Adrenal gland (tissue), 19 donors: ENCODE measurements at regions of chr2 and their contacts with region 1.

Region 1: DNA sequence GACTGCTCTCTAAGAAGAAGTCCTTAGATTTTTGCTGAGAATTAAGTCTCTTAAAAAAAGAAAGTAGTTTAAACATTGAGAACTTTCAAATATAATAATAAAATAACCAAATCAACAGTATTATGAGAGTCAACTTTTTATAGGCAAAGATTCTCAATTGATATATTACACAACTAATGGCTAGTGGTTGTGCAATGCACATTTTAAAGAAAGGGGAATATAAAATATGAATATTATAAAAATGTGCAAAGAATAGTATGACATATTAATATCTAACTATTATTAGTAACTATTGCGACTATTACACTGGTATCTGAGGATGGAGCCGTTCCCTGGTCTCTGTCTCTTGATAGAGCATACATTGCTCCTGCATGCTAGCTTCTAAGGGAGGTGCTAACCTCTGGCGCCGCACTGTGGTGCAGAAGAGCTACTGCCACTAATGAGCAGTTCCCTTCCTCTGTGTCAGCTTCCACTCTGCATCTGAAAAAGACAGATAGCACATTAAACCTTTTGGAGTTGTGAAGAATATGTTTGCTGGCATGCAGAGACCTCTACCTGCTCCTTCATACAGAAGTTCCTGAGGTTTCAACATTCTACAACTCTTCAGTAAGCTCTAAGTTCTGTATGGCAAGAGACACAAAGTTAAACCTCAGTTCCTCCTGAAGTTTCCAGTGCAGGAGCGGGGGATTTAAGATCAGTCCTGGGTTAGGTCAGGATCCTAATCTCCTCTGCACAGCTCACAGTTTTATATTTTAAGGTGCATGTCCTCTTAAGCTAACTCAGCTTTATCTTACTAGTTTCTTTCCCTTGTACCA is 3.5 kb upstream of the SLC9A2 start:
- DNase-seq: peak; percentile 38 to 82 (median 60)
- H3K4me3 ChIP-seq: no peak overlapping the region
- H3K27ac ChIP-seq: no peak overlapping the region
- H3K4me1 ChIP-seq: peaks cover 12 to 14% of the 10 kb centered on the region in 2 donors
- H3K27me3 ChIP-seq: peaks cover 35% of the 10 kb centered on the region
- CTCF ChIP-seq: peak; percentile 69 to 82 (median 76)
- POLR2A ChIP-seq: no peak

Region 2: GRCh38 chr2:102313025-102313424 is 302.8 kb before region 1 on chr2:
- intact Hi-C with region 1: no loop called
- DNase-seq: no peak
- H3K4me3 ChIP-seq: no peak overlapping the region
- H3K27ac ChIP-seq: no peak overlapping the region
- H3K4me1 ChIP-seq: no peaks in the 10 kb centered on the region
- H3K27me3 ChIP-seq: no peaks in the 10 kb centered on the region
- CTCF ChIP-seq: no peak
- POLR2A ChIP-seq: no peak

Region 3: GRCh38 chr2:102473020-102473419 is 142.8 kb before region 1 on chr2 and contains the start of gene SLC9A4:
- intact Hi-C with region 1: loop called (anchors 10 kb)
- DNase-seq: peak in 6 of 7 donors; percentile 21 to 73 (median 58)
- H3K4me3 ChIP-seq: no peak within 1 kb of the TSS
- H3K27ac ChIP-seq: no peak within 1 kb of the TSS
- H3K4me1 ChIP-seq: peaks cover 0 to 4% of the 10 kb centered on the region in 2 donors
- H3K27me3 ChIP-seq: peaks cover 6% of the 10 kb centered on the region
- CTCF ChIP-seq: peak; percentile 64 to 83 (median 76)
- POLR2A ChIP-seq: no peak
- total RNA-seq, gene SLC9A4: 0.17 TPM in 1 of 9 donors, not detected in the others

Region 4: GRCh38 chr2:102520028-102520427 is 95.8 kb before region 1 on chr2:
- intact Hi-C with region 1: loop called in 1 of 2 experiments (anchors 10 kb)
- DNase-seq: peak in 6 of 7 donors; percentile 20 to 55 (median 40)
- H3K4me3 ChIP-seq: no peak overlapping the region
- H3K27ac ChIP-seq: no peak overlapping the region
- H3K4me1 ChIP-seq: no peaks in the 10 kb centered on the region
- H3K27me3 ChIP-seq: no peaks in the 10 kb centered on the region
- CTCF ChIP-seq: peak; percentile 54 to 61 (median 60)
- POLR2A ChIP-seq: no peak

Region 5: DNA sequence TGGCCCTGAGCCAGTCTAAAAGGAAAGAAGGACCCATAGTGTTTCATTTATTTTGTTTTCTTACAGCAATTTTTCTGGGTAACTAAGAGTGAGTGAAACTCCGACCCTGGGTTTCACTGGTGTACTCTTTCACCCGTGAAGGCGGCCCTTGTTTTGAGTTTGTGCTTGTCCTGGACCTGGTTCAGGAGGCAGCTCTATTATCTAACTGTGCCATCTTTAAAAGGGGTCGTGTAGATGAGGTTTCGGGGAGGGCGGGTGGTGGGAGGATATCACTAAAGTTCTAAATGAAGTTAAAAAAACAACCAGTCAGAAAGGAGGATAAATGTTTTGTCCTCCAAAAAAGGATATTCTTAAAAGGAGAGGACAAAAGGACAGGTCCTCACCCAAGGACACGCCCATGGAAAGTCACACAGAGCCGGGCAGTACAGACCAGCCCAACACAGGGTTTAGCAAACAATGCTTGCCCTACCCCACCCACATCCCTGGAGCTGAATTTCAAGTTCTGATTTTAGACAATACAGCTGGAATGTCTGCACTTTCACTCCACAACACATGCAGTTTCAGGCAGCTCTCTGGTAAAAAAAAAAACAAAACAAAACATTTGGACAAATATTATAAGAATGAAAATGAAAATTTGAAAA is 75.1 kb before region 1 on chr2:
- intact Hi-C with region 1: loop called in 1 of 2 experiments (anchors 10 kb)
- DNase-seq: no peak
- H3K4me3 ChIP-seq: no peak overlapping the region
- H3K27ac ChIP-seq: no peak overlapping the region
- H3K4me1 ChIP-seq: no peaks in the 10 kb centered on the region
- H3K27me3 ChIP-seq: no peaks in the 10 kb centered on the region
- CTCF ChIP-seq: no peak
- POLR2A ChIP-seq: no peak

Region 6: DNA sequence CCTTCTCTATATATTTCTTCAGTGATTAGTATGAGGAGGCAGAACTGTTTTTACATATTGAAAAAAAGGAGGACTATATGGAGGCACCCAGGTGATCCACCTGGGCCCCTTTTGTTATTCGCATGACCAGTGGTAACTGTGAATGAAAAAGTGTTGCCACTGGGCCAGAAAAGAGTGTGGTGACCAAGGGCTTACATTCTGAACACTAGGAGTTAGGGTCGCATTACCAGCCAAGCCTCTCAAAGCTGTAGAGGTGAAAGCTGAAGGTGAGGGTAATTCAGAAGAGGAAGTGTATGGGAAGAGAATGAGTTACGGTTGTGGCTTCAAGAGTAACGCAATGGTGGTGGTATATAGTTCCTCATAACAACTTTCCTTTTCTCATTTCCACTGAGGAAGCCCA is 633.6 kb after region 1 on chr2:
- intact Hi-C with region 1: no loop called
- DNase-seq: no peak
- H3K4me3 ChIP-seq: no peak overlapping the region
- H3K27ac ChIP-seq: no peak overlapping the region
- H3K4me1 ChIP-seq: no peaks in the 10 kb centered on the region
- H3K27me3 ChIP-seq: no peaks in the 10 kb centered on the region
- CTCF ChIP-seq: no peak
- POLR2A ChIP-seq: no peak